ENCODE measurements at regions of chr15 and their contacts with region 1.

Region 1: GRCh38 chr15:98800437-98801233 is 152.3 kb downstream of the IGF1R start:
- DNase-seq: peak; percentile 25 to 82 (median 71)
- H3K4me3 ChIP-seq: peak overlapping the region in 55 of 59 donors; percentile 1 to 59 (median 30)
- H3K27ac ChIP-seq: peak overlapping the region; percentile 13 to 96 (median 85)
- H3K27me3 ChIP-seq: no peaks in the 10 kb centered on the region
- CTCF ChIP-seq: peak in 13 of 56 donors; percentile 3 to 19 (median 12)

Region 2: DNA sequence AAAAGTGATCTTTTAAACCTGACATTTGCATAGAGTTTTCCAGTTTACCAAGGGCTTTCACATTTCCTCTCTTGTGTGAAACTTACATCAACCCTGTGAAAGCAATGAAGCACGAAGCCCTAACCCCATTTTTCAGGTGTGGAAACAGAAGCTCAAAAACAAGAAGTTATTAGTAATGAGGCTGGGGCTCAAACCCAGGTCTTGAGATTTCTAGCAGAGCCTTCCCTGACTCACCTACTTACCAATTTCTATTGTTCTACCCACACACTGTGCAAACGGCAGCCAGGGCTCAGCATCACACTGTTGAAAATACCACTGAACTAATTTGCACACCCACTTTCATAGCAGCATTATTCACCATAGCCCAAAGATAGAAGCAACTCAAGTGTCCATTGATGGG is 270.1 kb before region 1 on chr15:
- intact Hi-C with region 1: no loop called
- DNase-seq: no peak
- H3K4me3 ChIP-seq: no peak overlapping the region
- H3K27ac ChIP-seq: no peak overlapping the region
- H3K27me3 ChIP-seq: peaks cover 0 to 15% (median 0%) of the 10 kb centered on the region in 45 donors
- CTCF ChIP-seq: no peak

Region 3: DNA sequence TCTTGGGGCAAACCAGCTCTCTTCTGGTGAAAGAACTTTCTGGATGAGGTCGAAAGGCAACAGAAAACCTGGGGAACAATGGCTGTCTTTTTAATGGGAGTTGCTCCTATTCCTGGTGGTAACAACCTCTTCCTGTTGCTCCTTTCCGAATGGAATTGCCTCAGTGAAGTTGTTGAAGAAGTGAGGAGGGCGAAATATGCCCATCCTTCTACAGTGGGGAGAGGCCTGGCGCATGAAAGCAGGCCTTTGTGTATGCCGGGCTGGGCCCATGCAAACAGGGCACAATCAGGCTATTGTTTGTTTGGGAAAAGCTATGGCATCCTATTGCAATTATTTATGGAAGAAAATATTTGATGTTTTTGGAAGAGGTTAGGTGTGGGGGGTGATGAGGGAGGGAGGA is 14.6 kb after region 1 on chr15:
- intact Hi-C with region 1: loop called (anchors 2 kb)
- DNase-seq: peak in 9 of 10 donors; percentile 58 to 82 (median 70)
- H3K4me3 ChIP-seq: peak overlapping the region in 17 of 59 donors; percentile 5 to 51 (median 28)
- H3K27ac ChIP-seq: peak overlapping the region; percentile 3 to 95 (median 82)
- H3K27me3 ChIP-seq: no peaks in the 10 kb centered on the region
- CTCF ChIP-seq: peak in 6 of 56 donors; percentile 19 to 43 (median 25)

Measured in dorsolateral prefrontal cortex (tissue), 120 donors.